GM23248 (cell line): ENCODE measurements at regions of chr2 and their contacts with region 1.

Region 1: DNA sequence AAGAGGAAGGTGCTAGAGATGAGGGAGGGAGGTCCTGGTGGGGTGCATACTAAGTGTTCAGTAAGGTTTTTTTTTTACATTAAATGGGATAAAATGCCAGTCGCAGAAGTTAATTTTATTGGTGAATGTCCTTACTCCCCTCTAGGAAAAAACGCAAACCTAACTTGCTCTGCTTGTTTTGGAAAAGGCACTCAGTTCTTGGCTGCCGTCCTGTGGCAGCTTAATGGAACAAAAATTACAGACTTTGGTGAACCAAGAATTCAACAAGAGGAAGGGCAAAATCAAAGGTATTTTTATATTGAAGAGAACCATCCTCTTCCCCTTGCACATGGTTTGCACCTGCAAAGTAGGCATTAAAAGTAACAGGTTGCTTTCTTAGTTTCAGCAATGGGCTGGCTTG is 12.7 kb upstream of the IL18R1 start:
- DNase-seq: peak; percentile 13
- H3K4me3 ChIP-seq: no peak overlapping the region
- H3K27ac ChIP-seq: no peak overlapping the region
- H3K4me1 ChIP-seq: peaks cover 3% of the 10 kb centered on the region; the same call in 1 of the 2 replicates
- H3K27me3 ChIP-seq: no peaks in the 10 kb centered on the region; the same call in 1 of the 2 replicates

Region 2: DNA sequence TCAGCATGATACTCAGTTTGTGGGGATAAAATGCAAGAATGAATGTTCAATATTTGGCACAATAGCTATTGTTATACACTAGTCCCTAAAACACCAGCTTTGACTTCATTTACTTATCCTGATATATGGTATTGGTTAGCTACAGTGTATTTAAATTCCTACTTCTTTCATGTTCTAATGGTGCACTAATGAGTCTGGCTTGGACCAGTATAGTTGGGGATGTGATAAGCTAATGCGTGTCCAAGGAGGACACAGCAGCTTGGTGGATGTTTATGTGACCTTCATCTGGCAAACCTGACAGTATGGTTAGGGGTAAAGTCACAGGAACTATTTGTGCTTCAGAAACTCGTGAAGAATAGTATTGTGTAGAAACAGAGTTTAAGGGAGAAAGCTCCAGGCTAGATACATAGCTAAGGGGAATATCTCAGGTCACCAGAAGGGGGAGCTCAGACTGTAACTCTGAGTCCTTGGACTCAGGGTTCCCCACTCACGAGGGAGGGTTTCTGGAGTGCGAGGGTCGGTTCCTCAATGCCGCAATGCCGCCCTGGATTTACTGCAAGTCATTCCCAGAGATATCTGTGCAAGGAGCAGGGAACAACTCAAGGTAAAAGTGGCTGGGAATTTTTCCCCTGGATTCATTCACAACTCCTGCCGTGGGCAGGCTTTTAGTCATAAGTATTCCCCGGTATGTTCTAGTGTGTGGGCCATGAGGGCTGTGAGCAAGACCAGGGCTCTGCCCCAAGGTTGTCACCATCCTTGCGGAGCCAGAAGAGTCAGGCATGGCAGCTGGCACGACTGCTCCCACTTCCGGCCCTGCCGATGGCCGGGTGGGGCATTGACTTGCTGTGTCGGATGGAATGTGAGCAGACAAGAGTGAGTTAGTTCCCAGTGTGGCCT is 336.7 kb before region 1 on chr2:
- in situ Hi-C with region 1: no loop called
- DNase-seq: peak; percentile 72
- H3K4me3 ChIP-seq: no peak overlapping the region
- H3K27ac ChIP-seq: no peak overlapping the region
- H3K4me1 ChIP-seq: no peaks in the 10 kb centered on the region
- H3K27me3 ChIP-seq: no peaks in the 10 kb centered on the region

Region 3: DNA sequence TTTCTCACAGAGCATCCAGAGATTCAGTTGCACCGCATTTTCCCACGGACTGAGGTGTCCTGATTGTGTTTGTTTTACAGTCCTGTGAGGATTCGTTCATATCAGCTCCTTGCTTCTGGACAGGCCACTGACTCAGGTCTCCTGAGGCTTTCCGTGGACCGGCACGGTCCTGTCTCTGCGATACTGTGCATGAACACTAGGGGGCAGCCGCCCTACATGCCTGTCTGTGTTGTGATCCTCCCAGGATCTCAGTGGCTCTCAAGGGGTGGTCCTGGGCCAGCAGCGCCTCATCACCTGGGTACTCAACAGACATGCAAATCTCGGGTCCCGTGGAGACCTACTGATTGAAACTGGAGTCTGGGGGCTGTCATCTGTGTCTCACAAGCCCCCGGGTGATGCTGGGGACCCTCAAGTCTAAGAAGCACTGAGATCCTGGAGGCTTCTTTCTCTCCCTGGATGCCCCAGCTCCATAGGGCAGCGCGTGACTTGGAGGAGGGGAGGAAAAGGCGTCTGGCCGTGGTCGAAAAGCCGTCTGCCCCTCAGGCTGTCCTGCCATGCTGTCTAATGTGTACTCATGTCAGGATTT is 322.2 kb before region 1 on chr2:
- in situ Hi-C with region 1: loop called (anchors 10 kb)
- DNase-seq: peak; percentile 89
- H3K4me3 ChIP-seq: no peak overlapping the region
- H3K27ac ChIP-seq: no peak overlapping the region
- H3K4me1 ChIP-seq: peaks cover 40% of the 10 kb centered on the region
- H3K27me3 ChIP-seq: no peaks in the 10 kb centered on the region